ENCODE measurements at regions of chr7 and their contacts with region 1.

Region 1: DNA sequence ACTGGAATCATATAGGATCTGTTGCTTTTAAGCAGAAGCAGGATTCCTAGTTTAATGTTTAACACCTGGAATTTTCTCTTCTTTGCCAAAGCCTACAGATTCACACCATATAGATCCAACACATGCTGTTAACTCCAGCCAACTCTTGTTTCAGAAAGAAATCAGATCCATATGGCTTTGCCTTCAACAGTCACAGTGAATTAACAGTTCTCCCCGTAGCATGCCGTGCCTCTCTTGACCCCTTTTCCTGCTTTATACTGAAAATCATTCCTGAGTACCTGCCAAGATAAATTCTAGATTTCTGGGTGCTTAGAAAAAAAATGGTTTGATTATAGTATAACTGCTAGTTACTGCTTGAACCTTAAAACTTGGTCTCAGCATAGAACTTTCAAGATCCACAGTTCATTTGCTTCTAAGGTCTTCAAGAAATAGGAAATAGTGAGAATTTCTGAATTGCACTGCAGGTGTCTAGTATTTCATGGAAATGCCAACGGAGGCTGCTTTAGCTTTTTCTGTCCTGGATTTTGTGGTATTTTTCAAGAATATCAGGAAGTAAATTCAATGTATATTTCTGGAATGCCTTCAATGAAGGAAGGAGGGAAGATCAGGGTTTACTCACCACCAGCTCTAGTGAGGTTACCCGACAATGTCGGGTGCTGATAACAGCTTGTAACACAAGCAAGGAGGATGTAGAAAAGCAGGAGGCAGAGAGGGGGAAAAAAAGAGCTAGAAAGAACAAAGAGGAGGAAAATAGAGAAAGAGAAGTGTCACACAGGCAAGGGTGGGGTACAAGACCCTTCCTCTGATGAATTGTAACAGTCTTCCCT is 6.6 kb downstream of the AASS start:
- DNase-seq: peak; percentile 77
- H3K4me3 ChIP-seq: peak overlapping the region; percentile 12 to 70 (median 49)
- H3K27ac ChIP-seq: peak overlapping the region; percentile 33
- H3K4me1 ChIP-seq: peaks cover 18% of the 10 kb centered on the region
- H3K27me3 ChIP-seq: no peaks in the 10 kb centered on the region
- CTCF ChIP-seq: no peak
- POLR2A ChIP-seq: no peak

Region 2: DNA sequence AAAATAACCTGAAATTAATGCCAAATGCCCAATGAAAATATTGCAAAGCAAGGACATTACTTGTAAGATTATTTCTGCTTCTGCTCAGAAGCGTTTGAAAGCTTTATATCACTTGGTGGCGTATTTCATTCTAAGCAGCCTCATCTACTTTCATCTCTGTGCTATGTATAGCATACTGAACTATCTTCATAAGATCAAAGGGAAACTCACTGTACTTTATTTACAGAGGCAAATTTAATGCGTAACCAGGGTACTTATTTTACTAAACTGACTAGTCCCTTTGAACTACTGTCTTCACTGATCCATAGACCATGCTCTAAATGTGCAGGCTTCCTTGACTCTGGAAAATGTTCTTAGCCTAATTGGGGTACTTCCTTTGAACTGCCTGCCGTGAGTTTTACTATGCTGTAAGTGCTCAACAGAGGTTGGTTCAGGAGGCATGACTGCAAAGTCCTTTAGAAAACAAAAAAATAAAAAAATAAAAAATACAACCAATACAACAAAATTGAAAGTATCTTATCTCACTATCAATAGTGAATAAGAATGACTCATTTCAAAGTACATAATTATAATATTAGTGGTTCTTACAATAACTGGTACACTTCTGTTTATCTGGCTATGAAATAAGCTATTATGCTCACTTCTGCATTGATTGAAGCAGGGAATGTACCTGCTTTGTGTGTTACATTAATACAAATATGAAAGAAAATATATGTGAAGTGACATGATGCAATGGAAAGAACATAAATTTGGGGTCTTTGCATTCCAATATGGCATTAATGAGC is 1238.6 kb before region 1 on chr7:
- CTCF ChIA-PET with region 1: no interaction called
- POLR2A ChIA-PET with region 1: no interaction called
- dilution Hi-C with region 1: no loop called
- intact Hi-C with region 1: no loop called
- DNase-seq: no peak
- H3K4me3 ChIP-seq: no peak overlapping the region
- H3K27ac ChIP-seq: no peak overlapping the region
- H3K4me1 ChIP-seq: no peaks in the 10 kb centered on the region
- H3K27me3 ChIP-seq: no peaks in the 10 kb centered on the region
- CTCF ChIP-seq: no peak
- POLR2A ChIP-seq: no peak

Region 3: GRCh38 chr7:122430710-122431109 is 293.2 kb after region 1 on chr7:
- CTCF ChIA-PET with region 1: no interaction called
- POLR2A ChIA-PET with region 1: no interaction called
- dilution Hi-C with region 1: no loop called
- intact Hi-C with region 1: loop called (anchors 1 kb)
- DNase-seq: peak; percentile 88
- H3K4me3 ChIP-seq: no peak overlapping the region
- H3K27ac ChIP-seq: no peak overlapping the region
- H3K4me1 ChIP-seq: peaks cover 13% of the 10 kb centered on the region
- H3K27me3 ChIP-seq: no peaks in the 10 kb centered on the region
- CTCF ChIP-seq: no peak
- POLR2A ChIP-seq: no peak